ENCODE measurements at regions of chr20 and their contacts with region 1.

Region 1: GRCh38 chr20:45823949-45824835 is 2.9 kb downstream of the TNNC2 start:
- DNase-seq: peak; percentile 48
- ATAC-seq: peak; percentile 85
- H3K4me3 Mint-ChIP-seq: peak overlapping the region; percentile 82
- H3K27ac Mint-ChIP-seq: peak overlapping the region; percentile 60
- H3K4me1 Mint-ChIP-seq: peaks cover 26% of the 10 kb centered on the region
- H3K27me3 Mint-ChIP-seq: peaks cover 18% of the 10 kb centered on the region
- CTCF ChIP-seq: no peak

Region 2: DNA sequence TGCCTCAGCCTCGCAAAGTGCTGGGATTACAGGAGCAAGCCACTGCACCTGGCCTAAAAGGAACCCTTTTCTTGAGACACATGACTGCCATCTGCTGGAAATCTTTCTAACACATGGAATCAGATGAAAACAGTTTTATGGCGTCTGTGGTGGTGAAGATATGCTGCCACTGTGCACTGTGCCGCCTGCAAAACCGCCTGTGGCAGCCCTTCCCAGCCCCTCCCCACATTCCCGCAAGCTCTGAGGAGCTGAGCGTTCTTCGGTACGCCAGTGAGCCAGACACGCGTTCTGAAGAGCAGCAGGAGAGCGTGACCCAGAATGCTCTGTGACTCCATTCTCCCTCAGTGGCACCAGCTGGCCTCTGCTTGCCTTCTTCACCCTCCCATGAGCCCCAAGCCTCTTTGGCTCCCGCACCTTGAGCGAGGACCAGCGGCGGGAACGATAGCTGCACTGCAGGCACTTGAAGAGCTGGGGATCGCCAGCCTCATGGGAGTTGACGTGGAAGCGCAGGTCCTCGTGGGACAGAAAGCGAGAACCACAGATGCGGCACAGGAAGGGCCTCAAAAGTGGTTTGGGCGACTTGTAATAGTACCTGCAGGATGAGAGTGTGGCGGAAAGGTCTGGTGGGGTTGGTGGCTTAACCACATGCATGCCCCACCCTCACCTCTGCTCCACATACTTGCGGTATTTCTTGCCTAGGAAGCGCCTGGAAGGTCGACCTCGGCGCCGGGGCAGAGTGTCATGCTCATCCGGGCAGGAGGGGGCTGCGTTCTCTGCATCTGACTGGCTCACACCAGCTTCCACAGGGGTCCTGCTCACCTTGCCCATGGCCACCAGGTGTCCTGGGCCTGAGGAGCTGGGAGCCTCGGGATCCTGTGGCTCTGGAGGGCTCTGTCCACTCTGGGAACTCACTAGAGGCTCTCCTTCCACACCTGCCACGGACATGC is 139.1 kb after region 1 on chr20:
- CTCF ChIA-PET with region 1: interaction called, 11 read pairs
- POLR2A ChIA-PET with region 1: interaction called, 6 read pairs
- intact Hi-C with region 1: loop called (anchors 1 kb)
- DNase-seq: no peak
- ATAC-seq: no peak
- H3K4me3 Mint-ChIP-seq: no peak overlapping the region
- H3K27ac Mint-ChIP-seq: no peak overlapping the region
- H3K4me1 Mint-ChIP-seq: peaks cover 21% of the 10 kb centered on the region
- H3K27me3 Mint-ChIP-seq: no peaks in the 10 kb centered on the region
- CTCF ChIP-seq: no peak